ENCODE measurements at regions of chr10 and their contacts with region 1.

Region 1: GRCh38 chr10:21495752-21496342 is 29.6 kb downstream of the SKIDA1 start:
- DNase-seq: peak; percentile 85 to 95 (median 95)
- ATAC-seq: peak; percentile 85 to 88
- H3K4me3 ChIP-seq: peak overlapping the region; percentile 79
- H3K27ac ChIP-seq: peak overlapping the region; percentile 73
- H3K4me1 ChIP-seq: no peaks in the 10 kb centered on the region
- H3K27me3 ChIP-seq: no peaks in the 10 kb centered on the region

Region 2: GRCh38 chr10:21278491-21279239 is 217.2 kb before region 1 on chr10:
- intact Hi-C with region 1: loop called (anchors 2 to 10 kb)
- DNase-seq: peak; percentile 96 to 99 (median 96)
- ATAC-seq: peak; percentile 97 to 98
- H3K4me3 ChIP-seq: no peak overlapping the region
- H3K27ac ChIP-seq: no peak overlapping the region
- H3K4me1 ChIP-seq: no peaks in the 10 kb centered on the region
- H3K27me3 ChIP-seq: no peaks in the 10 kb centered on the region

Region 3: DNA sequence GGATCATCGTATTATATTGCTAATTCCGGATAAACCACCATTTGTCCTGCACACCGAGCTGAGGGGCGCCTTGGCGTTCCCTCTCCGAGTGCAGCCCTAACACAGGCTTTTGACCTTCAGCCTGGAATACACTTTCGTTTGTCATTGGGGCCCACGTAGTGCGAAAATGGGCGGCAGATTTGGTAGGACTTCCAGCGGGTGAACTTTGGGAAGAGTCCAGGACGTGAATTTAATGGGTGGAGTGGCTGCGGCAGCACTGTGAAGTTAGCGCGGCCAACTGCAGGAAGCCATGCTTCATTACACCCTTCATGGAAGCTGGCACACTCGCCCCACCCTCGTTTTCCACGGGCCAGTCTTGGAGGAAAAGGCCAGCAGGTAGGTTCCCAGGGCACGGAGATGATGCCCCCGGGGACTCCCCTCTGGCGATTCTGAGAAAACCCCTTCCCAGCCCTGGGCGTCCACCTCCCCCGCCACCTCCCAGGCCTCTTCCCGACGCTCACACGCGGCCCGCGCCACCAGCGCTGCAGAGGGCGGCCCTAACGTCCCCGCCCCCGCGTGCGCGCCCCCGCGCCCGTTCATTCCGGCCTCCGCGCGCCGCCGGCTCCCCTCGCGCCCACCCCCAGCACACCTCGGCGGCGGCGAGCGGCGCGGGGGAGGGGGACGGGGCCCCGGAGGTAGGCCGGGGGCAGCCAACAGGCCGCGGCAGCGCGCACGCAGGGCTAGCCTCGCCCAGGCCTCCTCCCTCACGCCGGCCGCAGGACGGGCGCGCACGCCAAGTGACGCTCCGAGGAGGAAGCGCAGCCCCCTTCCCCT is 37.8 kb after region 1 on chr10 and contains the start of gene MLLT10:
- intact Hi-C with region 1: loop called in 2 of 4 experiments (anchors 5 kb)
- DNase-seq: peak; percentile 97 to 99 (median 98)
- ATAC-seq: peak; percentile 96 to 97
- H3K4me3 ChIP-seq: peak within 1 kb of the TSS; percentile 95
- H3K27ac ChIP-seq: peak within 1 kb of the TSS; percentile 99
- H3K4me1 ChIP-seq: no peaks in the 10 kb centered on the region
- H3K27me3 ChIP-seq: no peaks in the 10 kb centered on the region
- total RNA-seq, gene MLLT10: 26.6 to 36.1 (median 29.8) TPM

Region 4: DNA sequence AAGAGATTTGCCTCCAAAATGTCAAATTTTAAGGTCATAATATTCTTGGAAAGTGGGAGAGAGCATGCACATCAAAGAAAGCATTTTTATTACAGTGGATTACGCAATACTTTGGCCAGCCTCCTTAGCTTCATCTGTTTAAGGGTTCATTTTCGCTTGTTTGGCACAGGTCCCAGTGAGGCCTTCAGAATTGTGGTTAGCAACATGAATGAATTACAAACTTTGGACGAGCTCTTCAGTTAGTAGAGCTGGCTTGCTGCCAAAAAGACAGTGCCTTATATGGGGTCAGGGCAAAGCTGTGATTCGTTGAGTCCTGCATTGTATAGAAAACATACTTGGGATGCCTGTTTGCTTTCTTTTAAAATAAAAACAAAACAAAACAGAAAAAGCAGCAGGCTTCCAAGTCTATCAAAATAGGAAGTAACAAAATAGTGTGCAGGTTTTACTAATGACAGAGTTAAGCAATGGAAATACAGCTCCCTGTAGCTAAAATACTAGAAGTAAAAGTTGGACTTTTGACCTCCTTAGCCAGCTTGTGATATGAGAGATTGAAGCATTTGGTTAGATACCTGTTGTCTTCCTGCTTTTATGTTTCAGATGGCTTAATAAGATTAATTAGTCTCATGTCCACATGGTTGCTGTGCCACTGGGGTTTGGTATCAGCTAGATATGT is 229.0 kb after region 1 on chr10:
- intact Hi-C with region 1: loop called in 3 of 4 experiments (anchors 5 to 10 kb)
- DNase-seq: peak; percentile 82 to 93 (median 92)
- ATAC-seq: peak; percentile 93 to 95
- H3K4me3 ChIP-seq: no peak overlapping the region
- H3K27ac ChIP-seq: no peak overlapping the region
- H3K4me1 ChIP-seq: peaks cover 3% of the 10 kb centered on the region
- H3K27me3 ChIP-seq: no peaks in the 10 kb centered on the region

Region 5: GRCh38 chr10:21732067-21732772 is 236.4 kb after region 1 on chr10:
- intact Hi-C with region 1: loop called (anchors 2 to 10 kb)
- DNase-seq: peak; percentile 57 to 85 (median 83)
- ATAC-seq: peak; percentile 91 to 93
- H3K4me3 ChIP-seq: no peak overlapping the region
- H3K27ac ChIP-seq: no peak overlapping the region
- H3K4me1 ChIP-seq: no peaks in the 10 kb centered on the region
- H3K27me3 ChIP-seq: no peaks in the 10 kb centered on the region

Region 6: GRCh38 chr10:21953585-21954057 is 457.8 kb after region 1 on chr10:
- intact Hi-C with region 1: loop called in 2 of 4 experiments (anchors 10 kb)
- DNase-seq: no peak
- ATAC-seq: peak in 1 of 2 donors; percentile 36
- H3K4me3 ChIP-seq: no peak overlapping the region
- H3K27ac ChIP-seq: no peak overlapping the region
- H3K4me1 ChIP-seq: no peaks in the 10 kb centered on the region
- H3K27me3 ChIP-seq: no peaks in the 10 kb centered on the region

Region 7: DNA sequence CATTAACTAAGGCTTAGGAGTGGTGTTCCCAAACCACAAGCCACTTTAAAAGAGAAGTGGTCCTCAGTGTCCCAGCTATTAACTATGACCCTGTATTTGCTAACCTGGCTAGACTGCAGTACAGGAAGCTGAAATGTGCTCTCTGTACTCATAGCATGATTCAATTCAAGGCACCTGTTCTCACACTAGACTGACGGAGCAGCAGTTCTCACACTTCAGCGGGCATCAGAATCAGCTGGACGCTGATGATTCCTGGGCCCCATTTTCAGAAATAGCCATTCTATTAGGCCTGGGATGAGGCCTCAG is 1575.0 kb after region 1 on chr10:
- intact Hi-C with region 1: loop called in 1 of 4 experiments (anchors 10 kb)
- DNase-seq: no peak
- ATAC-seq: no peak
- H3K4me3 ChIP-seq: no peak overlapping the region
- H3K27ac ChIP-seq: no peak overlapping the region
- H3K4me1 ChIP-seq: no peaks in the 10 kb centered on the region
- H3K27me3 ChIP-seq: no peaks in the 10 kb centered on the region